ENCODE measurements at regions of chr9 and their contacts with region 1.

Region 1: GRCh38 chr9:127519301-127520166 is 68.2 kb downstream of the LRSAM1 start:
- DNase-seq: peak; percentile 95
- H3K4me3 ChIP-seq: no peak overlapping the region
- H3K27ac ChIP-seq: peak overlapping the region; percentile 99
- H3K4me1 ChIP-seq: peaks cover 46% of the 10 kb centered on the region
- H3K27me3 ChIP-seq: no peaks in the 10 kb centered on the region
- CTCF ChIP-seq: no peak
- POLR2A ChIP-seq: no peak

Region 2: GRCh38 chr9:127503947-127504782 is 15.4 kb before region 1 on chr9:
- CTCF ChIA-PET with region 1: interaction called, 13 read pairs
- POLR2A ChIA-PET with region 1: no interaction called
- dilution Hi-C with region 1: no loop called
- intact Hi-C with region 1: no loop called
- DNase-seq: peak; percentile 75
- H3K4me3 ChIP-seq: no peak overlapping the region
- H3K27ac ChIP-seq: no peak overlapping the region
- H3K4me1 ChIP-seq: no peaks in the 10 kb centered on the region
- H3K27me3 ChIP-seq: no peaks in the 10 kb centered on the region
- CTCF ChIP-seq: peak; percentile 86 to 98
- POLR2A ChIP-seq: no peak

Region 3: DNA sequence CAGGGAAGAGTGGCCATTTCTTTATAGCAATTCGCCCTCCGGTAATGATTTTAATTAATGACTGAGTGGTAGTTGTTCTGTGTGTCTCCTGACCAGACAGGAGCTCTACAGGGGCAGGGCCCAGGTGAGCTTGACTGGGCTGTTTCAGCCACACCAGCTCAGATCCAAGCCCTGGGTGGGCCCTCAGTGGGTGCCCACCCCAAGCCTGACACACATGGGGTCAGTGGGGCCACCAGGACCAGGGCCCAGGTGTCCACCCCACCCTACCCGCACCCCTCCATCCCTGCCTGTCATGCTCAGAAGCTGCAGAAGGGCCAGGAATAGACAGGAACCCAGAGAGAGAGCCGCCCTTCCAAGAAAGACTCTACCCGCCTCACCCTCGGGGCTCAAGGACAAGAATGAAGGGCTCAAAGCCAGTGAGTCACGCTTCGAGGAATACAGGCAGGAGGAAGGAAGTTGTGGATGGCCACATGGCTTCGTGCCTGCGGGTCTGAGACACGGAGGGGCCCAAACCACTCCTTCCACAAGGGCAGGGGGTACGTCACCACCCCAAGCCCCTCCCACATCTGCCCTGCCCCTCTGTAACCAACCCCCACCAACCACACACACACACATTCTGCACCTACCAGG is 36.3 kb after region 1 on chr9:
- CTCF ChIA-PET with region 1: interaction called, 6 read pairs
- POLR2A ChIA-PET with region 1: interaction called, 3 read pairs
- dilution Hi-C with region 1: no loop called
- intact Hi-C with region 1: loop called (anchors 1 kb)
- DNase-seq: peak; percentile 93
- H3K4me3 ChIP-seq: no peak overlapping the region
- H3K27ac ChIP-seq: peak overlapping the region; percentile 95
- H3K4me1 ChIP-seq: peaks cover 56% of the 10 kb centered on the region
- H3K27me3 ChIP-seq: no peaks in the 10 kb centered on the region
- CTCF ChIP-seq: no peak
- POLR2A ChIP-seq: peak; percentile 51

Region 4: DNA sequence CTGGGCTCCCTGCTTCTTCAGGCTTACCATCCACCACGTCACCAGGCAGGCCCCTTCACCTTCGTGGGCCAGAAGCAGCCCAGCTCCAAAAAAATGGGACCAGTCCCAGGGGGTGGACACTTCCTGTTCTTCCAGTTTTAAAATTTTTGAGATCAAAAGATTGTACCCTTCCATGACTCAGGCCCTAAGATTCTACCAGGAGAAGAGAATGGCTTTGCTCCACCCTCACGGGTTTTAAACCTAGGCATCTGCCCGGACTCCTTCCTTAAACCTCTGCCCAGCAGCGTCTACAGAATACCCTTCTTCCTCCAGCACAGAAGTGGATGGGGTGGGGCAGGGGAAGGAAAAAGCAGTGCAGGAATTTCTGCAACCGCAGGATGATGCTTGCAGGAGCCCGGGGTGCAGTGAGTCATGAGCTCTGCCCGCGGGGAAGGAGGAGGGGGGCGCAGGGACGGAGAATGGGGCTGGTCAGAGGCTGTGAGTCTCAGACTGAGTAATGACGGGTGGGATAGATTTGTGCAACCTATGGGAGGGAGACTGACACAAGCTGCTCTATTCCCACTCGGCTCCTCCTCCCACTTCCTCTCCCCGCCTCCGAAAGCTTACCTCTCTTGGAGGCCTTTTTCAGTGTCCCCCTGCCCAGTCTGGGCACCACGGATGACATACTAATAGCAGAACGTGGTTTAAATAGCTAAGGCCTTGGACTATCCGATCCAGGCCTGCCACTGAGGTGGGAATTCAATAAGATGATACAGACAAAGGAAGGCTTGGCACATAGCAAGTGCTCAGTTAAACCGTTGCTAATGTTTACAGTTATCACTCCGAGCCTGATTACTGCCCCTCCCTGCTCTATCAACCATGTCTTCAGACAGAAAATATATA is 42.3 kb after region 1 on chr9:
- CTCF ChIA-PET with region 1: interaction called, 6 read pairs
- POLR2A ChIA-PET with region 1: interaction called, 4 read pairs
- dilution Hi-C with region 1: no loop called
- intact Hi-C with region 1: loop called (anchors 1 kb)
- DNase-seq: peak; percentile 91
- H3K4me3 ChIP-seq: no peak overlapping the region
- H3K27ac ChIP-seq: peak overlapping the region; percentile 85
- H3K4me1 ChIP-seq: peaks cover 71% of the 10 kb centered on the region
- H3K27me3 ChIP-seq: no peaks in the 10 kb centered on the region
- CTCF ChIP-seq: no peak
- POLR2A ChIP-seq: no peak